Posterior vena cava (tissue), 2 donors: ENCODE measurements at regions of chr1 and their contacts with region 1.

Region 1: GRCh38 chr1:94160811-94161210 is 39.9 kb upstream of the ABCA4 start:
- DNase-seq: no peak

Region 2: GRCh38 chr1:93865253-93865652 is 295.6 kb before region 1 on chr1:
- intact Hi-C with region 1: no loop called
- DNase-seq: no peak

Region 3: GRCh38 chr1:94125551-94126514 is 35.0 kb before region 1 on chr1:
- intact Hi-C with region 1: loop called in 1 of 2 experiments (anchors 1 kb)
- DNase-seq: no peak